SK-N-SH (cell line): ENCODE measurements at regions of chr6 and their contacts with region 1.

Region 1: DNA sequence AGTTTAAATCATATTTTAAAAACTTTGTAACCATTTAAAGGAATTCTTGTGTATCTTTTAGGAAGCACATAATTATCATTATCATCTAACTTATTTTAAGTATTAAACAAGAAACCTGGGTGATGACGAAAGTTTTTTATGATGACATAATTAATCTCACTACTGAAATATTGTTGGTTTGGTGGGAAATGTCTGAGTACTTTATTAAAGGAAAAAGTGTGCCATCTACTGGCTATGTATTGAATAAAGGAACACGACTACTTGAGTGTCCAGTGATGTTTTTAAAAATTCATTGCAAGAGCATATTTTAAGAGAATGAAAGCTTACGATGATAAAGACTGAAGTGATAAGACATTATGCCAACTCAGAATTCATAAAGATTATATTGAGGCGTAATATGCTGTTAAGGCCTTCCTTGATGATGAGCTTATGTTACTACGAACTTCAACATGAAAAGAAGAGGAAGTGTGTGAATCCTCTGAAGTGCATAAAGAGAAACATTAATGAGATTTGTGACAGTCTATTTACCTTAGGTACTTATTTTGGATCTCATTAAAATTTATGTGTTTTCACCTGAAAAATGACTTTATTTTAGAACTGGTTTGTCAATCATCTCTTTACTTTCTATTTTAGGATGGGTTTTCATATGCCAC is 12.0 kb upstream of the TRMT11 start:
- DNase-seq: peak; percentile 34
- H3K4me3 ChIP-seq: no peak overlapping the region
- H3K27ac ChIP-seq: no peak overlapping the region
- H3K4me1 ChIP-seq: no peaks in the 10 kb centered on the region
- H3K27me3 ChIP-seq: no peaks in the 10 kb centered on the region
- CTCF ChIP-seq: peak; percentile 74
- EP300 ChIP-seq: no peak
- RAD21 ChIP-seq: peak; percentile 80

Region 2: GRCh38 chr6:125839471-125839870 is 134.9 kb before region 1 on chr6:
- CTCF ChIA-PET with region 1: no interaction called
- POLR2A ChIA-PET with region 1: no interaction called
- DNase-seq: no peak
- H3K4me3 ChIP-seq: no peak overlapping the region
- H3K27ac ChIP-seq: peak overlapping the region in 1 of 2 experiments; percentile 40; a peak in 2 of 4 replicates
- H3K4me1 ChIP-seq: peaks cover 8 to 18% of the 10 kb centered on the region in 2 experiments; a peak in 3 of 4 replicates
- H3K27me3 ChIP-seq: no peaks in the 10 kb centered on the region
- CTCF ChIP-seq: no peak
- EP300 ChIP-seq: no peak
- RAD21 ChIP-seq: no peak

Region 3: DNA sequence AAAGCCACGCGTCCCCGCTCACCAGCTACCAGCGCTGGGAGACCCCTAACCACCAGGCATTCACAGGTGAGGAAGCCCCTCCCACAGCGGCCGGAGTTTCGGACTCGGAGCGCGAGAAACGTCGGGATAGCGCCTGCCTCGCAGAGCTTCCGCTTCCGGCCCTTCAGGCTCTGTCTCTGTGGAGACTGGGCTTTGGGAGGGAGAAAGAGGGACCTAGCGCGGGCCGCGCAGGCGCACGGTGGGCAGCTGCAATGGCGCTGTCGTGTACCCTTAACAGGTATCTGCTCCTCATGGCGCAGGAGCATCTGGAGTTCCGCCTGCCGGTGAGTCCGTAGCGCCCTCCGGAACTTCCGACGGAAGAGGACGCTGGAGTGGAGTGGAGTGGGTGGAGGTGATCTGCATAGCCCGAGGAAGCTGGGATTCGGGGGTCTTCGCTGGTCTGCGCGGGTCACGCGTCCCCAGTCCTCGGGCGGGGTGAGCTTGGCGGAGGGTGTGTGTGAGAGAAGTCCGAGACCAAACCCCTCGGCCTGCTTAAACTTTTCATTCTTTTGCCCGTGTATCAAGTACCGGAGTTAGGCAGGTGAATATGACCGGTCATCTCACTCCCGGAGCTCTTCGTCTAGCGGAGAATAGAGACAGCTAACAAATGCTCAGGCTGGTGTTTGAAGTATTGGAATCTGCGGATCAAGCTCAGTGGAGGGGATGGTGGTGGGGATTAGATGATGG is 12.1 kb after region 1 on chr6 and contains the start of gene TRMT11:
- CTCF ChIA-PET with region 1: interaction called, 35 read pairs
- POLR2A ChIA-PET with region 1: no interaction called
- DNase-seq: peak; percentile 91
- H3K4me3 ChIP-seq: peak within 1 kb of the TSS; percentile 88 to 98
- H3K27ac ChIP-seq: peak within 1 kb of the TSS; percentile 53 to 87; a peak in 3 of 4 replicates
- H3K4me1 ChIP-seq: peaks cover 3 to 21% of the 10 kb centered on the region in 2 experiments
- H3K27me3 ChIP-seq: no peaks in the 10 kb centered on the region
- CTCF ChIP-seq: no peak
- EP300 ChIP-seq: 0 out of 4 replicates have a peak, but pooled peaks of 1 of the 2 experiments have one; percentile 2
- RAD21 ChIP-seq: no peak
- polyA plus RNA-seq, gene TRMT11: 15.0 and 22.8 TPM in 2 replicates

Region 4: DNA sequence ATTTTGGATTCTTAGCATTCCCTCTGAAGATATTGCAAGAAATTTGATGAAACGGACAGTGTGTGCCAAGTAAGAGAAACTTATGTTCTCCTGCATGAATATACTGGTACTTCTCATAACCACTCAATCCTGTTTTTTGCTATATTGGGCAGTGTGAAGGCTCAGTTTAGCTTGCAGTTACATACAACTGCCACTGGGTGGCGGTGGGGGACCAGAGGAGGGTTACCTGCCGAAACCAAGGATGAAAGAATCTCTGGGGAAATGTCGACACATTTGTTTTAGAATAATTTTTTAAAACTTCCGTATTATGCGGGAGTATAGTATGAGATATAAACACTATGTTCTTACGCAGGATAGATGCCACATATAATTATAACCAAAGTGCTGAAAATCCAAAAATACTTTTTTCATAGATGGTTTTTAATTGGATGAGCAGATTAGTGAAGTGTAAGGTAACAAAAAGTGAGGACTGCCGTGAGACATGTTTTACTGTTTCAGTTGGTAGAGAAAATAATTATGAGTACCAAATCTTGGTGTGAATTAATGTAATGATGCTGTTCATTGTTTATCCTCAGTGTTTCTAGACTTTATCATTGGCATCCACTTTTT is 21.7 kb after region 1 on chr6:
- CTCF ChIA-PET with region 1: interaction called, 11 read pairs
- POLR2A ChIA-PET with region 1: no interaction called
- DNase-seq: peak; percentile 57
- H3K4me3 ChIP-seq: no peak overlapping the region; a peak in 1 of 4 replicates
- H3K27ac ChIP-seq: no peak overlapping the region
- H3K4me1 ChIP-seq: no peaks in the 10 kb centered on the region; a peak in 1 of 4 replicates
- H3K27me3 ChIP-seq: no peaks in the 10 kb centered on the region
- CTCF ChIP-seq: peak; percentile 99
- EP300 ChIP-seq: no peak
- RAD21 ChIP-seq: peak; percentile 94